ENCODE measurements at regions of chr4 and their contacts with region 1.

Region 1: DNA sequence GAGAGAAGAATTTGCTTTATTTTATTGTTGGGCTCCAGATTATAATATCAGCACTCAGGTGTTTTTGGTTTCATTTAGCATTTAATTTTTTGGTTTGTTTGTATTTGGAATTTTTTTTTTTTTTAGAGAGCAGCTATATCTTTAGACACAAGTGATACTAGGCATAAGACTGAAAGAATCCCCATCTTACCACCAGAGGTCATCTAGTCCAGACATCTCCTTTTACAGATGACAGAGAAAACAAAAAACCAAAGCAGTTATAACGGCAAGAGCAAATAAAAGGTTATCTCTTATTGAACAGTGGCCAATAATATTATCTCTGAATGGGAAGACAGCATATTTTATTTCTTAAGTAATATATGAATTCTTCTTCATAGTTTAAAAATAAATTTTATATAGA is 22.8 kb downstream of the USP38 start:
- DNase-seq: no peak
- H3K4me3 ChIP-seq: no peak overlapping the region
- H3K27ac ChIP-seq: no peak overlapping the region
- H3K4me1 ChIP-seq: no peaks in the 10 kb centered on the region
- H3K27me3 ChIP-seq: no peaks in the 10 kb centered on the region
- CTCF ChIP-seq: peak; percentile 34 to 38

Region 2: DNA sequence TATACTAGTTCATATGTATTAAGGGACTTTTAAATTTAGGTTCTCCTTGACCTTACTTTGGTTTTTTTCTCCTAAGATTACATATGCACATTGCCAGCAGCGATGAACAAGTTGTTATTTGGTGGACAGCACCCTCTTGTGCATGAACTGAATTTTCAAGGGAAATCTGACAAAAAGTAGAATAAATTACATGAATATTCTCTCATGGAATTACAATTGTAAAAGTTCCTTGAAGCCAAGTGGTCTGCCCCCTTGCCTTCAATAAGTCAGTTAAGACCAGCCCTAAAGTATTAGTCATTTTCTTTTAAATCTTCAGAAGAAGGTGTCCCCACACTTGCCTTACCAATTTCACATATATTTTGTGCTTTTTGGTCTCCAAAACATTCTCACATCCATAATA is 275.3 kb after region 1 on chr4:
- intact Hi-C with region 1: loop called (anchors 5 kb)
- DNase-seq: no peak
- H3K4me3 ChIP-seq: no peak overlapping the region
- H3K27ac ChIP-seq: no peak overlapping the region
- H3K4me1 ChIP-seq: no peaks in the 10 kb centered on the region
- H3K27me3 ChIP-seq: no peaks in the 10 kb centered on the region
- CTCF ChIP-seq: peak; percentile 66 to 71

Measured in tibial artery (tissue), 4 donors.